HepG2 (cell line): ENCODE measurements at regions of chr2 and their contacts with region 1.

Region 1: GRCh38 chr2:199488772-199489400 is 31.1 kb upstream of the SATB2 start:
- DNase-seq: peak; percentile 54
- ATAC-seq: peak; percentile 60
- H3K4me3 ChIP-seq: no peak overlapping the region
- H3K27ac ChIP-seq: no peak overlapping the region
- H3K4me1 ChIP-seq: no peaks in the 10 kb centered on the region
- H3K27me3 ChIP-seq: no peaks in the 10 kb centered on the region
- CTCF ChIP-seq: peak; percentile 76
- EP300 ChIP-seq: no peak
- POLR2A ChIP-seq: no peak
- RAD21 ChIP-seq: 0 out of 2 replicates have a peak, but pooled peaks have one; percentile 17

Region 2: GRCh38 chr2:198374375-198375082 is 1114.4 kb before region 1 on chr2:
- CTCF ChIA-PET with region 1: interaction called, 4 read pairs
- POLR2A ChIA-PET with region 1: no interaction called
- in situ Hi-C with region 1: no loop called
- intact Hi-C with region 1: loop called (anchors 5 kb)
- DNase-seq: peak; percentile 51
- ATAC-seq: peak; percentile 69
- H3K4me3 ChIP-seq: no peak overlapping the region
- H3K27ac ChIP-seq: no peak overlapping the region
- H3K4me1 ChIP-seq: no peaks in the 10 kb centered on the region
- H3K27me3 ChIP-seq: no peaks in the 10 kb centered on the region
- CTCF ChIP-seq: peak; percentile 73
- EP300 ChIP-seq: no peak
- POLR2A ChIP-seq: no peak
- RAD21 ChIP-seq: no peak

Region 3: DNA sequence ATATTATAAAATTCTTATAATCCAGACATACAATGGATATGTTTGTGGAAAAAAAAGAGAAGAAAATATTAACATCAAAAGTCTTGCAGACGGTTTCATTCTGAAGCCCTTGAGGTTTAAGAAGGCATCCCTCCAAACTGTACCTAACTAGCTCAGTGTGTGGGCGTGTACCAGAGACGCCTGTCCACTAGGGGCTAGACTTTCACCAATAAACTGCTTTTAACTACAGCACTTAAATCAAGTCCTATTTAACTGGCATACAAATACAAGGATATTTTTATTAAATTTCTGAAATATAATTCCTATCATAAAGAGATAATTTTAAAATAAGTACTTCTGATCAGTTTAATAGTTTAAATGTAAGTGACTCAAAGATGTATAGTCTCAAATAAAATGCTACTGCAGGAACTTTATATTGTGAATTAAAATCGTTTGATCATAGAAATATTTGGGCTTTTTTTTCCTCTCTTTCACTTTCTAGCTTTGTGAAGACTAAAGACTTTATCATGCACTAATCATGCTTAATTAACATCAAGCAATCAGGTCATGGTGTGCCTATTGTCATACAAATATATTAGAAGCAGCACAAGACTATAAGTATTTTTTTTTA is 468.9 kb before region 1 on chr2:
- CTCF ChIA-PET with region 1: no interaction called
- POLR2A ChIA-PET with region 1: no interaction called
- in situ Hi-C with region 1: loop called (anchors 25 kb)
- intact Hi-C with region 1: loop called (anchors 5 kb)
- DNase-seq: peak; percentile 13
- ATAC-seq: peak; percentile 91
- H3K4me3 ChIP-seq: no peak overlapping the region
- H3K27ac ChIP-seq: no peak overlapping the region
- H3K4me1 ChIP-seq: no peaks in the 10 kb centered on the region
- H3K27me3 ChIP-seq: no peaks in the 10 kb centered on the region
- CTCF ChIP-seq: peak; percentile 47
- EP300 ChIP-seq: no peak
- POLR2A ChIP-seq: no peak
- RAD21 ChIP-seq: no peak

Region 4: GRCh38 chr2:199405241-199405640 is 83.6 kb before region 1 on chr2:
- CTCF ChIA-PET with region 1: no interaction called
- POLR2A ChIA-PET with region 1: no interaction called
- in situ Hi-C with region 1: no loop called
- intact Hi-C with region 1: loop called (anchors 1 kb)
- DNase-seq: peak; percentile 29
- ATAC-seq: peak; percentile 84
- H3K4me3 ChIP-seq: no peak overlapping the region
- H3K27ac ChIP-seq: no peak overlapping the region
- H3K4me1 ChIP-seq: no peaks in the 10 kb centered on the region
- H3K27me3 ChIP-seq: no peaks in the 10 kb centered on the region
- CTCF ChIP-seq: peak; percentile 37
- EP300 ChIP-seq: no peak
- POLR2A ChIP-seq: no peak
- RAD21 ChIP-seq: no peak